IMR-90 (cell line): ENCODE measurements at regions of chr18 and their contacts with region 1.

Region 1: GRCh38 chr18:63518178-63519012 is 23.8 kb upstream of the SERPINB12 start:
- DNase-seq: peak; percentile 70
- ATAC-seq: peak; percentile 93
- H3K4me3 ChIP-seq: no peak overlapping the region
- H3K27ac ChIP-seq: no peak overlapping the region
- H3K4me1 ChIP-seq: no peaks in the 10 kb centered on the region
- H3K27me3 ChIP-seq: peaks cover 25% of the 10 kb centered on the region
- CTCF ChIP-seq: peak; percentile 82
- POLR2A ChIP-seq: no peak; the same call in 1 of the 2 replicates
- RAD21 ChIP-seq: peak; percentile 91

Region 2: GRCh38 chr18:63071566-63072175 is 446.7 kb before region 1 on chr18:
- CTCF ChIA-PET with region 1: no interaction called
- POLR2A ChIA-PET with region 1: no interaction called
- dilution Hi-C with region 1: no loop called
- in situ Hi-C with region 1: no loop called
- intact Hi-C with region 1: no loop called
- DNase-seq: no peak
- ATAC-seq: no peak
- H3K4me3 ChIP-seq: no peak overlapping the region
- H3K27ac ChIP-seq: no peak overlapping the region
- H3K4me1 ChIP-seq: no peaks in the 10 kb centered on the region
- H3K27me3 ChIP-seq: peaks cover 3% of the 10 kb centered on the region; the same call in 1 of the 2 replicates
- CTCF ChIP-seq: no peak
- POLR2A ChIP-seq: no peak
- RAD21 ChIP-seq: no peak

Region 3: GRCh38 chr18:63578357-63578958 is 60.1 kb after region 1 on chr18:
- CTCF ChIA-PET with region 1: interaction called, 47 read pairs
- POLR2A ChIA-PET with region 1: no interaction called
- dilution Hi-C with region 1: no loop called
- in situ Hi-C with region 1: no loop called
- intact Hi-C with region 1: loop called (anchors 1 kb)
- DNase-seq: peak; percentile 36
- ATAC-seq: peak; percentile 54; the same call in 1 of the 2 replicates
- H3K4me3 ChIP-seq: no peak overlapping the region
- H3K27ac ChIP-seq: no peak overlapping the region
- H3K4me1 ChIP-seq: no peaks in the 10 kb centered on the region
- H3K27me3 ChIP-seq: no peaks in the 10 kb centered on the region; the same call in 1 of the 2 replicates
- CTCF ChIP-seq: peak; percentile 68
- POLR2A ChIP-seq: no peak
- RAD21 ChIP-seq: peak; percentile 67

Region 4: GRCh38 chr18:63637703-63638102 is 119.3 kb after region 1 on chr18:
- CTCF ChIA-PET with region 1: no interaction called
- POLR2A ChIA-PET with region 1: no interaction called
- dilution Hi-C with region 1: no loop called
- in situ Hi-C with region 1: no loop called
- intact Hi-C with region 1: no loop called
- DNase-seq: no peak
- ATAC-seq: no peak
- H3K4me3 ChIP-seq: no peak overlapping the region
- H3K27ac ChIP-seq: no peak overlapping the region
- H3K4me1 ChIP-seq: no peaks in the 10 kb centered on the region
- H3K27me3 ChIP-seq: no peaks in the 10 kb centered on the region
- CTCF ChIP-seq: no peak
- POLR2A ChIP-seq: no peak
- RAD21 ChIP-seq: no peak

Region 5: DNA sequence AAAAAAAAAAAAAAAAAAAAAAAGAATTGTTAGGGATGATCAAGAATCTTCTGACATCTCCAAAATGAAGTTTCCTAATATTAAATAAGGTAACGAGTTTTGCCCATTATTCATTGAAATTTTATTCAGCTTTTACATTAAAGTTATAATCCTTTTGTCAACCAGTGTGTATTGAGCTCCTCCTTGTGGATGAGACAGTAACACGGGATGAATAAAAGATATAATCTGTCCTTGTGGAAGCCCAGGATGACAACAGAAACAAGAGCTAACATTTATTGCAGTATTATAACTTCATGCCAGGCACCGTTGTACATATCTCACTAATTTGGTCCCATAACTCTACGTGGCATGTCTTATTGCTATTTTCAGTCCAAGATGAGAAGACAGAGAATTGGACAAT is 223.4 kb after region 1 on chr18:
- CTCF ChIA-PET with region 1: interaction called, 18 read pairs
- POLR2A ChIA-PET with region 1: no interaction called
- dilution Hi-C with region 1: no loop called
- in situ Hi-C with region 1: loop called (anchors 10 kb)
- intact Hi-C with region 1: loop called (anchors 1 kb)
- DNase-seq: peak; percentile 61
- ATAC-seq: no peak
- H3K4me3 ChIP-seq: no peak overlapping the region
- H3K27ac ChIP-seq: no peak overlapping the region
- H3K4me1 ChIP-seq: no peaks in the 10 kb centered on the region
- H3K27me3 ChIP-seq: no peaks in the 10 kb centered on the region
- CTCF ChIP-seq: peak; percentile 75
- POLR2A ChIP-seq: no peak
- RAD21 ChIP-seq: peak; percentile 86

Region 6: GRCh38 chr18:63808125-63808524 is 289.7 kb after region 1 on chr18:
- CTCF ChIA-PET with region 1: no interaction called
- POLR2A ChIA-PET with region 1: interaction called, 12 read pairs
- dilution Hi-C with region 1: no loop called
- in situ Hi-C with region 1: no loop called
- intact Hi-C with region 1: no loop called
- DNase-seq: no peak
- ATAC-seq: no peak
- H3K4me3 ChIP-seq: no peak overlapping the region
- H3K27ac ChIP-seq: no peak overlapping the region
- H3K4me1 ChIP-seq: no peaks in the 10 kb centered on the region
- H3K27me3 ChIP-seq: no peaks in the 10 kb centered on the region
- CTCF ChIP-seq: no peak
- POLR2A ChIP-seq: no peak
- RAD21 ChIP-seq: no peak

Region 7: GRCh38 chr18:63848159-63848558 is 329.8 kb after region 1 on chr18:
- CTCF ChIA-PET with region 1: interaction called, 22 read pairs
- POLR2A ChIA-PET with region 1: interaction called, 4 read pairs
- dilution Hi-C with region 1: no loop called
- in situ Hi-C with region 1: loop called (anchors 5 kb)
- intact Hi-C with region 1: loop called (anchors 1 kb)
- DNase-seq: peak; percentile 75
- ATAC-seq: peak; percentile 79
- H3K4me3 ChIP-seq: no peak overlapping the region
- H3K27ac ChIP-seq: no peak overlapping the region
- H3K4me1 ChIP-seq: no peaks in the 10 kb centered on the region
- H3K27me3 ChIP-seq: no peaks in the 10 kb centered on the region; the same call in 1 of the 2 replicates
- CTCF ChIP-seq: peak; percentile 77
- POLR2A ChIP-seq: no peak
- RAD21 ChIP-seq: peak; percentile 83

Region 8: GRCh38 chr18:63936156-63936931 is 417.9 kb after region 1 on chr18:
- CTCF ChIA-PET with region 1: interaction called, 6 read pairs
- POLR2A ChIA-PET with region 1: no interaction called
- dilution Hi-C with region 1: no loop called
- in situ Hi-C with region 1: no loop called
- intact Hi-C with region 1: loop called (anchors 1 kb)
- DNase-seq: peak; percentile 45
- ATAC-seq: peak; percentile 98
- H3K4me3 ChIP-seq: peak overlapping the region; percentile 54
- H3K27ac ChIP-seq: no peak overlapping the region
- H3K4me1 ChIP-seq: no peaks in the 10 kb centered on the region
- H3K27me3 ChIP-seq: peaks cover 18% of the 10 kb centered on the region
- CTCF ChIP-seq: peak; percentile 67
- POLR2A ChIP-seq: no peak
- RAD21 ChIP-seq: peak; percentile 68

Region 9: GRCh38 chr18:63994783-63995399 is 476.5 kb after region 1 on chr18:
- CTCF ChIA-PET with region 1: no interaction called
- POLR2A ChIA-PET with region 1: no interaction called
- dilution Hi-C with region 1: no loop called
- in situ Hi-C with region 1: no loop called
- intact Hi-C with region 1: loop called (anchors 1 kb)
- DNase-seq: peak; percentile 61
- ATAC-seq: peak; percentile 94
- H3K4me3 ChIP-seq: no peak overlapping the region
- H3K27ac ChIP-seq: no peak overlapping the region
- H3K4me1 ChIP-seq: no peaks in the 10 kb centered on the region
- H3K27me3 ChIP-seq: no peaks in the 10 kb centered on the region
- CTCF ChIP-seq: peak; percentile 89
- POLR2A ChIP-seq: no peak
- RAD21 ChIP-seq: peak; percentile 73